ENCODE measurements at regions of chr12 and their contacts with region 1.

Region 1: GRCh38 chr12:14272956-14273907 is 92.2 kb upstream of the ATF7IP start:
- DNase-seq: peak in 1 of 5 donors; percentile 27
- H3K4me3 ChIP-seq: no peak overlapping the region
- H3K27ac ChIP-seq: no peak overlapping the region
- H3K4me1 ChIP-seq: no peaks in the 10 kb centered on the region
- H3K27me3 ChIP-seq: no peaks in the 10 kb centered on the region
- CTCF ChIP-seq: no peak

Region 2: GRCh38 chr12:14314801-14315200 is 41.6 kb after region 1 on chr12:
- intact Hi-C with region 1: no loop called
- DNase-seq: peak in 1 of 5 donors; percentile 5
- H3K4me3 ChIP-seq: no peak overlapping the region
- H3K27ac ChIP-seq: no peak overlapping the region
- H3K4me1 ChIP-seq: no peaks in the 10 kb centered on the region
- H3K27me3 ChIP-seq: no peaks in the 10 kb centered on the region
- CTCF ChIP-seq: no peak

Region 3: DNA sequence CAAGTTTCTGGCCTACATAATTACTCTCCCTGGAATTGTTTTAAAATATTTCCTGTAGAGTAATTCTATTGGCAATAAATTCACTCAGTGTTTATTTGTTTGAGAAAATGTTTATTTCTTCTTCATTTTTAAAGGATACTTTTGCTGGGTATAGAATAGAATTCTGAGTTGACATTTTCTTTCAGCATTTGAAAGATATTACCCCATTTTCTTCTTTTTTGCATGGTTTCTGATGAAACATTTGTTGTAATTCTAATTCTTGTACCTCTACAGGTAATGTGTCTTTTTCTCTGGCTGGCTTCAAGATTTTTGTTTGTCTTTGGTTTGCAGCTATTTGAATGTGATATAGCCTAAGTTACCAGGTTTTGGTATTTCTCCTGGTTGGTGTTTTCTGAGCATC is 67.1 kb after region 1 on chr12:
- intact Hi-C with region 1: loop called (anchors 10 kb)
- DNase-seq: no peak
- H3K4me3 ChIP-seq: no peak overlapping the region
- H3K27ac ChIP-seq: no peak overlapping the region
- H3K4me1 ChIP-seq: no peaks in the 10 kb centered on the region
- H3K27me3 ChIP-seq: no peaks in the 10 kb centered on the region
- CTCF ChIP-seq: no peak

Measured in kidney (tissue), 22 donors.